ENCODE measurements at regions of chr1 and their contacts with region 1.

Region 1: DNA sequence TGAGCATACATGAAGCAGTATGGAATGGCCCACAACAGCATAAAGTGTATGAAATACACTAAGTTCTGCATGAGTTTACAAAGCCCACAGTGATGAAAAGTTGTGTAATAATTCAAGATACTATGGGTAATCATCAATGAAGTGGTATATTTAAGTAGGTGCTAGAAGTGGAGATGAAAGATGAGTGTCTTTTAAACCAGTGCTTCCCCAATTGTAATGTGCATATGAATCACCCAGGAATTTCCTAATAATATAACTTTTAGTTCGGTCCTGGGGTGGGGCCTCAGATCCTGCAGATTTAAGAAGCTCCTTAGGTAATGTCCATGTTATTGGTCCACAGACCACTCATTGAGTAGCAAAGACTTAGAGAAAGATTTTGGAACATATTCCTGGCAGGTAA is 184.9 kb downstream of the DUSP10 start:
- DNase-seq: no peak
- H3K4me3 ChIP-seq: no peak overlapping the region
- H3K27ac ChIP-seq: no peak overlapping the region
- H3K27me3 ChIP-seq: no peaks in the 10 kb centered on the region
- CTCF ChIP-seq: no peak

Region 2: DNA sequence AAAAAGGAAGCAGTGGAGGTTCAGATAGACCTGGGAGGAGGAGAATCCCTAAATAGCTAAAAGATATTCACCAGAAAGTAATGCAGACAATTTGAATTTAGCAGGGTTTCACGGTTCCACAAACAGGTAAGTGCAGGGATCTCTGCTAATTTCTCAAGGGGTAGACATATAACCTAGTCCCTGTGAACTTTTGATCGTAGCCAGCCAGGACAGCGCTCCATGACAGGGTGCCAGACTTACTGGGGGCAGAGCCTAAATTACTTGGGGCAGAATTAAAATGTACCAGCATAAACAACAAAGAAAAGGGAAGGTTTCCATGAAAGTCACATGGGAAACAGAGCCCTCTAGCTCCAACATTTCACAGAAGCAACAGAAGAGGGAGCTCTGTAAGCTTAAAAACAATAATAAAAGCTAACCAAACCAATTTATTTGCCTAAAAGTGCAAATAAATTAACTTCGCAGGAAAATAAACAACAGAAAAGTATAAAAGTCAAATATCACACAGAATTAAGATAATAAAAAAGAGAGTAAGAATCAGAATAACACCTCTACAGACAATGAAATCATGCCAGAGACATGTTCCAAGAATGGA is 13.4 kb before region 1 on chr1:
- CTCF ChIA-PET with region 1: interaction called, 11 read pairs
- POLR2A ChIA-PET with region 1: no interaction called
- DNase-seq: no peak
- H3K4me3 ChIP-seq: no peak overlapping the region
- H3K27ac ChIP-seq: no peak overlapping the region
- H3K27me3 ChIP-seq: no peaks in the 10 kb centered on the region
- CTCF ChIP-seq: peak; percentile 65

Region 3: GRCh38 chr1:221839796-221840395 is 282.9 kb after region 1 on chr1:
- CTCF ChIA-PET with region 1: no interaction called
- POLR2A ChIA-PET with region 1: no interaction called
- DNase-seq: no peak
- H3K4me3 ChIP-seq: no peak overlapping the region
- H3K27ac ChIP-seq: no peak overlapping the region
- H3K27me3 ChIP-seq: no peaks in the 10 kb centered on the region
- CTCF ChIP-seq: no peak

Measured in AG04450 (cell line).